HEK293 (cell line): ENCODE measurements at regions of chr20 and their contacts with region 1.

Region 1: GRCh38 chr20:54097236-54097529 is 26.8 kb upstream of the BCAS1 start:
- H3K4me3 ChIP-seq: no peak overlapping the region
- H3K27ac ChIP-seq: no peak overlapping the region
- H3K4me1 ChIP-seq: no peaks in the 10 kb centered on the region
- CTCF ChIP-seq: no peak

Region 2: GRCh38 chr20:53869466-53870258 is 227.5 kb before region 1 on chr20:
- CTCF ChIA-PET with region 1: no interaction called
- POLR2A ChIA-PET with region 1: no interaction called
- H3K4me3 ChIP-seq: no peak overlapping the region
- H3K27ac ChIP-seq: 0 out of 2 replicates have a peak overlapping the region, but pooled peaks have one; percentile 40
- H3K4me1 ChIP-seq: peaks cover 21% of the 10 kb centered on the region
- CTCF ChIP-seq: peak; percentile 56; the same call in 1 of the 2 replicates

Region 3: GRCh38 chr20:54207743-54208547 is 110.8 kb after region 1 on chr20 and contains the start of gene PFDN4:
- CTCF ChIA-PET with region 1: interaction called, 361 read pairs
- POLR2A ChIA-PET with region 1: no interaction called
- H3K4me3 ChIP-seq: peak within 1 kb of the TSS; percentile 92
- H3K27ac ChIP-seq: peak within 1 kb of the TSS; percentile 97
- H3K4me1 ChIP-seq: no peaks in the 10 kb centered on the region
- CTCF ChIP-seq: peak; percentile 96